PC-3 (cell line): ENCODE measurements at regions of chr2 and their contacts with region 1.

Region 1: GRCh38 chr2:174546581-174547506 is 50.8 kb downstream of the WIPF1 start:
- DNase-seq: peak; percentile 45
- ATAC-seq: peak; percentile 70
- H3K4me3 ChIP-seq: no peak overlapping the region
- H3K27ac ChIP-seq: no peak overlapping the region
- H3K4me1 ChIP-seq: no peaks in the 10 kb centered on the region
- H3K27me3 ChIP-seq: no peaks in the 10 kb centered on the region
- CTCF ChIP-seq: peak; percentile 57

Region 2: GRCh38 chr2:174312581-174313234 is 234.1 kb before region 1 on chr2:
- CTCF ChIA-PET with region 1: no interaction called
- POLR2A ChIA-PET with region 1: no interaction called
- intact Hi-C with region 1: no loop called
- DNase-seq: no peak
- ATAC-seq: no peak
- H3K4me3 ChIP-seq: no peak overlapping the region
- H3K27ac ChIP-seq: no peak overlapping the region
- H3K4me1 ChIP-seq: no peaks in the 10 kb centered on the region
- H3K27me3 ChIP-seq: 0 out of 2 replicates have a peak, but pooled peaks cover 9% of the 10 kb centered on the region
- CTCF ChIP-seq: no peak

Region 3: DNA sequence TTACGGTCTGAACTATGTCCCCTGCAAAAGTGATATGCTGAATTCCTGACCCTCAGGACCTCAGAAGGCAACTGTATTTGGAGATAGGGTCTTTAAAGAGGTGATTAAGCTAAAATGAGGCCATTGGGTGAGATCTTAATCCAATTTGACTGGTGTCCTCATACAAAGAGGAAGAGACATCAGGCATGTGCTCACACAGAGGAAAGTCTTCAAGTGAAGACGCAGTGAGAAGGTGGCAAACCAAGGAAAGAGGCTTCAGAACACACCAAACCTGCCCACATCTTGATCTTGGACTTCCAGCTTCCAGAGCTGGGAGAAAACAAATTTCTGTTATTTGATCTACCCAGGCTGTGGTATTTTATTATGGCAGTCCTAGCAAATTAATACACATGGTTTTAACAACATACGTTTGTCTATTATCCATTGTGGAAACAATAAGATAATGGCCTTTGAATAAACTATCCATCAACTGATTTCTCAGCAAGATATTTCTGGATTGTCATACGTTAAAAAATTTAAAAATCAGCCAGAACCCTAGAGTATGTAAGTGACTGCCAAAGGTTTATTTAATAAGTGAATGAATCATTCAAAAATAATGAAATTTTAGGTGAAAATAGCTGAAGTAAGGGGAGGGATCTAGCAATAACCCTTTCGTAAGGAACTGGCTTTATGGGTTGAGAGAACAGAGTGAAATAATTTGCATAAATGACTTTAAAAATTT is 44.2 kb after region 1 on chr2:
- CTCF ChIA-PET with region 1: no interaction called
- POLR2A ChIA-PET with region 1: no interaction called
- intact Hi-C with region 1: loop called (anchors 1 kb)
- DNase-seq: peak; percentile 35
- ATAC-seq: peak; percentile 76
- H3K4me3 ChIP-seq: no peak overlapping the region
- H3K27ac ChIP-seq: peak overlapping the region; percentile 45
- H3K4me1 ChIP-seq: peaks cover 22% of the 10 kb centered on the region
- H3K27me3 ChIP-seq: no peaks in the 10 kb centered on the region
- CTCF ChIP-seq: no peak